ENCODE measurements at regions of chr2 and their contacts with region 1.

Region 1: DNA sequence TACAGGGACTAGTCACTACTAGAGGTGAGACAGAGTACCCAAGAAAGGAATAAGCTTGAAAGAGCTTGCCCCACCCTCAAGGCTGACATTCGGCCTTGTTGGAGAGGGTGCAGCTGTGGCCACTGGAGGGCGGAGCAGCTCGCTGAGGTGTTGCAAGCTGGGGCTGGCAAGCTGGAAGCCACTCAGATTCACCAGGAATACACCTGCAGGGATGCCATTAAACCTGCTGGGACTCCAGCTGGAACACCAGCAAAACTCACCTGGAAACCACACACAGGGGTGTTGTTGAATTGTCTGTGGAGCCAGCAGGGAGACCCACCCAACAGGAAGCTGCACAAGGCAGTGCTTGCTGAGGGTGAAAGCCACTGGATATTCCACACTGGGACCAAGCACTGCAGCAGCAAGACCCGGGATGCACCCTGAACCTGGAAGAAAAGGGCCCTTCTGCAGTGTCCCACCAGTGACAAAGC is 26.1 kb downstream of the KCTD18 start:
- DNase-seq: peak; percentile 52
- CTCF ChIP-seq: peak; percentile 80

Region 2: DNA sequence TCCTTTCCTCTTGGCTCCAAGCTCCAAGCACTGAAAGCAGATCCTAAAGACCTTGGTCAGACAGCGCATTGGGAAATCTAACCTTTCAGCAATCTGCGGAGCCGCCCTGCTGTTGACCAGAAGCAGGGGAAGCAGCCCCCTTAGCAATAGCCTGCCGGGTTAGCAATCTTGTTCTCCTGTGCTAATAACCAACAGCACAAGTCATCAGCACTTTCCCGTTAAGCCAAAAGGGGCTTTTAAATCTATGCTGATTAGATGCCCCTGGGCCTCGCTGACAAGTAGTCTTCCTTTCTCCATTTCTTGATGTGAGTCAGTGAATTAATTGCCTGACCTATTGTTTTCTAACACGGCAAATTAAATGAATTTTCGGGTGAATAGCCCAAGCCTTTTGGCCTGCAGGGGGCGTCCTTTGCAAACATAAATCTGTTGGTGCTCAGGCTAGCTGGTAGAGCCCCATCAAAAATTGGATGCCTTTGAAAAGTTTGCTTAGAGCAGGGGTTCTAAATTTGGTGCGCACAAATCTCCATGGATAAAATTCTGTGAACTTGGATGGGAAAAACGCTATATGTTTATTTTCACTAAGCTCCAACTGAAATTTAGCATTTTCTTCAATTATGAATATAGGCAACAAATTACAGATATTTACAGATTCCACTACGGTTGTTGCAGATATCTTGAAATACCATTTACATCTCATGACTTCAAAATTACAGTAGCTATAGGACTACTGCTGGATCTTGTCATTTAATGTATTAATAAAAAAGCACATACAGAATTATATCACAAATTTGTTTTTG is 503.7 kb before region 1 on chr2:
- CTCF ChIA-PET with region 1: interaction called, 82 read pairs
- POLR2A ChIA-PET with region 1: no interaction called
- DNase-seq: peak; percentile 50
- CTCF ChIP-seq: peak; percentile 82

Region 3: DNA sequence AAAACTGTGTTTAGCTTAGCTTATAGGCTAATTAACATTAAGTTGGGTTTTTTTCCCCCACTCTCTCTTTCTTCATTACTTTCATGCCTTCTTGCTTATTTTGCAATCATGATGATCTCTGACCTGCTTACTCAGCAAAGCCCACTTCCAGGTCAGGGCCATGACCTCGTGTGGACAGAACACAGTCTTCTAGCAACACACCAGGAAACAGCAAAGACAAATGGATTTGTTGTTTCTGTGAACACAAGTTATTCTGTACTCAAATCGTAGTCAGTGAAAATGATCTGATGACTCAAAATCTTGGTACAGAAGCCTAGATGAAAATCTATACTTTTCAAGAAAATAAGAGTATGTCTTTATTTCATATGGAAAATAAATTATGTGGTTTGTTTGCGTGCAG is 116.6 kb before region 1 on chr2:
- CTCF ChIA-PET with region 1: no interaction called
- POLR2A ChIA-PET with region 1: no interaction called
- DNase-seq: no peak
- CTCF ChIP-seq: no peak

Region 4: DNA sequence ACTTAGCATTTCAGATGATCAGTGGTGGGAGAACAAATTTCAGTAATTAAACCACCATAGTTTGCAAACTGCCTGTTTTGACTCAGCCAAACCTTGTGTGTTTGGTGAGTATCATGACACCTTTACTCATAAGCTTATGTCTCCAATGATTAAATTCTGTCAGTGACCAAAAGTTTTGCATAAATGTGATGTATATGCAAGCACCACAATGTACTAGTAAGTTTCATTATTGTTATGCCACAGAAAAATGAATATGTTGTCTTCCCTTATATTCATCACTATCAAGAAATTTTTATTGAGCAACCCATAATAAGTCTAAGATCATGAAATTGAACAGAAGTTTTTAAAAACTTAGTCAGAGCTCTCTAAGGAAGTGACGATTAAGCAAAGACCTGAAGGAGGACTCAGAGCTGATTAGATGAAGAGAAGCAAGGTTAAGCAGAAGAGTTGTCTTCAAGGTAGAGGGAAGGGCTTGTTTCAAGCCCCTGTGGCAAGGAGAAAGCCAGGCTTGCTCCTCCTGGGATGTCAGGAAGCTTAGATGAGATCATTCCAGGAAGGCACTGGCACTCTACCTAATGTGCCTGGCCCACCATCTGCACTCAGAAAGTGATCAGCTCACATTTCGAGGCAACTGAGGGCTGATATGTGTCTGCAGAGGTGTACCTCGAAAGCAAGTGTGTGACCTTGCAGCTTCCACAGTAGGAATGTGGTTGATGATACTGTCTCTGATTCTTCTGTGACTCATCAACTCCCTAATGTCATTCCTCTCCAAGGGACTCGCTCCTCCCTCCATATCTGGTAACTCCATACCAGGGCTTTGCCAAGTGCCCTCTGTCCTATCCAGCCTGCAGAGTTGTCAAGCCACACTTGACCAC is 28.6 kb before region 1 on chr2:
- CTCF ChIA-PET with region 1: interaction called, 11 read pairs
- POLR2A ChIA-PET with region 1: no interaction called
- DNase-seq: peak; percentile 30
- CTCF ChIP-seq: no peak

Region 5: GRCh38 chr2:200498402-200499162 is 14.8 kb after region 1 on chr2:
- CTCF ChIA-PET with region 1: interaction called, 56 read pairs
- POLR2A ChIA-PET with region 1: no interaction called
- DNase-seq: no peak
- CTCF ChIP-seq: no peak

Region 6: DNA sequence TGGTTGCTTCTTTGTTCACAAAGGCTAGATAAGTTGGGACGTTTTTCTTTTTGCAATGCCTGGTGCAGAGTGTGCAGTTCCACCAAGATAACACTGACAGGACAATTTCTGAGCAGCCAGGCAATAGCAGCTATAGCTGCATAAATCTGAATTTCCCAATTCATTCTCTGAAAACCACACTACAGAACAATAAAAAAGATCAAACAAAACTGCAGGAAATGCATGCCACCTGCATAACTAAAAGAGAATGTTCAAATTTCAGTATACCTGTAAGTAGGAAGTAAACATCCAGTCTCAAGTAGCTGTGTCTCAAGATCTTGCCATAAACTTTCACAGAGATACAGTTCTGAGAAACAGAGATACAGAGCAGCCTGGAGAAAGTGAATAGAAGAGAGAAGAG is 31.4 kb after region 1 on chr2:
- CTCF ChIA-PET with region 1: interaction called, 14 read pairs
- POLR2A ChIA-PET with region 1: no interaction called
- DNase-seq: no peak
- CTCF ChIP-seq: no peak

Region 7: DNA sequence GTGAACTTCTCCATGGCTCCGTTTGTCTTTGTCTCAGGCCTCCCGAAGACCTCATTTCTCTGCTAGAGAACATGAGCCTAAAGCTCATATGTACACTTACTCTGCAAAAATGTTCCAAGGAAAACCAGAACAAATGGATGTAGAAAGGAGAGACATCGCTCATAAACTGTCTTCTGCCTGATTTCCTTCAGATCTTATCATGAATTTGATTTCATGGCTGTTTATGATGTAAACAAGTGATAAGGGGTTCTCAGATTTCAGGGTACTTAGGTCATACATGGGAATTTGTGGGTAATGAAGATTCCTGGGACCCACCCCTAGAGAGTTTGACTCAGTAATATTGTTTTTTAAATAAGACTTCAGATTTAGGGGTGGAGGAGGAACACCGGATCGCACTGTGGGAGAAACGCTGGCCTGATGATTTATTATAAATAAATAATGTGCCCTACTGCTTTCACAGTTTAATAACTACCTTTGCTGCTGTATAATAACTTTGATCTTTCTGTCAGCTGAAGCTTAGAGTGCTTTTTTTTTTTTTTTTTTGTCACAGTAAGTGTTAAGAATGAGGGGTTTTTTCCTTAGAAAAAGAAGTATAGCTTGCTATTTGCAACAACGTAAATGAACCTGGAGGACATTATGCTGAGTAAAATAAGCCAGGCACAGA is 116.9 kb after region 1 on chr2:
- CTCF ChIA-PET with region 1: no interaction called
- POLR2A ChIA-PET with region 1: no interaction called
- DNase-seq: no peak
- CTCF ChIP-seq: no peak

Region 8: GRCh38 chr2:200703127-200703925 is 219.6 kb after region 1 on chr2:
- CTCF ChIA-PET with region 1: interaction called, 63 read pairs
- POLR2A ChIA-PET with region 1: no interaction called
- DNase-seq: peak; percentile 17
- CTCF ChIP-seq: peak; percentile 52